Cardiac septum (tissue), 1 donor: ENCODE measurements at regions of chr16 and their contacts with region 1.

Region 1: DNA sequence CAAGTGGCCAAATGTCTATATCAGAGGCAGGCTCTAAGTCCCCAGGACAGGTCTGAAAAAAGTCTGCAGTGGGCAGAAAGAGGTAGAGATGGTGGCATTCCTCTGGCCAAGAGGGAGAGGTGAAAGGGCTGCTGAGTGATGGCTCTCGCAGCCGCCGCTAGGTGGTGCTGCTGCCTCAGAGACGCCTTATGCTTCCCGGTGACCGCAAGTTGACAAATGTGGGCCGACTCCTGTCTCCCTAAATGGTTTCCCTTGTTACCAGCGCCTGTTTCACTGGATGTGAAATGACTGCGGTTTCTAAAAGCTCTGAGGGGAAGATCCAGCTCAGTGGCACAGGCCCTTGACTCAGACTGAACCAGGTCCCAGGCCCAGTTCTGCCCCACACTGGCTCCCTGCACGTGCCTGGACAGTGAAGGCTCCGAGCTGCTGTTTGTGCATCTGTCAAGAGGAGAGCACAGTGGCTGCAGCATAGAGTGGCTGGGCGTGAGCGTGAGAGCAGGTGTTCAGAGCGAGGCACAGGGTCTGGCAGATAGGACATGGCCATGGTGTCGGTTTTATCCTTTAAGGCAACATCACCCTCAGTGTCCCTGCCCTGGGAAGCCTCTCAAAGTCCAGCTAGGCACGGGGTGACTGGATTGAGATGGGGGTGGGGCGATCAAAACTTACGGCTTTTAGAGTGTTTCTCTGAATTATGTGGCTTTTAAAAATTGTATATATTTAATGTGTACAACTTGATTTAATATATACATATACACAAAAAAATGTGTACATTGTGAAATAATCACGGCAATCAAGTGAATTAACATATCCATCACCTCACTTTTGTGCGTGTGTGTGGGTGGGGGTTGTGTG is 19.9 kb downstream of the CLEC16A start:
- DNase-seq: peak; percentile 91

Region 2: GRCh38 chr16:10944249-10945064 is 19.8 kb before region 1 on chr16 and contains the start of gene CLEC16A:
- intact Hi-C with region 1: no loop called
- DNase-seq: peak; percentile 99
- total RNA-seq, gene CLEC16A: 28.4 TPM

Region 3: DNA sequence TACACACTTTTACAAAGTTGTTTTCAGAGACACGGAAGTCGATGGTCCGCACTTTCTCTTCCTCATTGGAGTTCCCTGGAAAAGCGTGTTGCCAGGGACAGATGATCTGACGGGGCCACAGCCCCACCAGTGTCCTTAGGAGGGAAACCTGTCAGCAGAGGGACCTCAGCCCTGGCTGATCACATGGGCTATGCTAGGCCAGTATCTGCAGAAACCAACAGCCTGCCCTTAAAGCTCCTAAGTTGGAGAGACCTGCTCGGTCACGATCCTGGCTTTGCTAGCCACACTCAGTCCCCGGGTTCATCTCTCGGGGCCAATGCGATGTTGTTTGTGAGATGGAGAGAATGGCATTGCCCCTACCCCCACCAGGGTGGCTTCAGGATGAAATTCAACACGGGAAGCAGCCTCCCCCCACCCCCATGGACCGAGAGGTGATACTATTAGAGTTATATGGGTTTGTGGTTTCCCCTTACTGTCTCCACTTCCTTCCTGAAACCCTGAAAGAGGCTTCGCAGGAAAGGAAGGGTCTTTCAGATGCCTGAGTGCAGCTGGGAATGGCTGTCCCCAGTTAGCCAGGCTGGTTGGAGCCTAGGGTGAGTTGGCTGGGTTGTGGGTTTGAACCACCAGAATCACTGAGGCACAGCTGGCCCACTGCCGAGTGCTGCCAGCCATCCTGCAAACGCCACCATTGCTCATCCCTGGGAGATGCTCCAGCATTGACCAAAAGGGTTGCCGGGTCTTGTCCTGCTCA is 397.6 kb after region 1 on chr16:
- intact Hi-C with region 1: loop called (anchors 10 kb)
- DNase-seq: peak; percentile 59

Region 4: DNA sequence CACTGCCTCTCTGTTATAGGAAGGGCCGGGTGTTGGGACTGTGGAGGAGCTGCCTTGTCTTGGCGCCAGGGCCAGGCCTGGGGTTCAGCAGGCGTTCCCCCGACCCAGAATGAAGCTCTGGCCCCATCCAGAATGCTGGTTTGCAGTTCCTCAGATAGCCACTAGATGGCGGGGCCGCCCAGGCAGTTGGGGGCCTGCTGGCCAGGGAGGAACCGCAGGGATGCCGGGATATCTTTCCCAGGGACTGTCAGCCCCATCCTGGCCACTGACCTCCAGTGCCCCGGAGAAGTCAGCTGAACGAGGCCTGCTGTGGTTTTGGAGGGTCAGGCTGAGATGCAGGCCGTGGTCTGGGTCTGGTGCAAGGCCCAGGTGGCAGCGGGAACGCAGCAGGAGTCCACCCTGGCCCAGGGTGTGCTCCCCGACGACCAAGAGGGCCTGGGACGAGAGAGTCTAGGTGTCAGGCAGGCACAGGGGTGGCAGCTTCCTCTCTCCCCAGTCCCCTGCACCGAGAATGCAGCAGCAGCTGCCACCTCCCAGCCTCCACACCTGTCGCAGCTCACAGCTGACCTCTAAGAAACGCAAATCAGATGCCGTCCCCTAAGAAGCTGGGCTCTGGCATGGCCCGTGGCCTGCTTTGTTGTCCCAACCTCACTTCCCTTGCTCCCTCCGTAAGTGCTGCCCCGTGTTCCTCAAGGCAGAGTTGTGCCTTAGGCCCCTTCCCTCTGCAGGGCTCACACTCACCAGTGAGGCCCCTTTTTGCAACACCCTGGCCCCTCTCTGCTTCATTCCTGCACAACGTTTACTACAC is 432.2 kb after region 1 on chr16:
- intact Hi-C with region 1: loop called (anchors 10 kb)
- DNase-seq: peak; percentile 87

Region 5: DNA sequence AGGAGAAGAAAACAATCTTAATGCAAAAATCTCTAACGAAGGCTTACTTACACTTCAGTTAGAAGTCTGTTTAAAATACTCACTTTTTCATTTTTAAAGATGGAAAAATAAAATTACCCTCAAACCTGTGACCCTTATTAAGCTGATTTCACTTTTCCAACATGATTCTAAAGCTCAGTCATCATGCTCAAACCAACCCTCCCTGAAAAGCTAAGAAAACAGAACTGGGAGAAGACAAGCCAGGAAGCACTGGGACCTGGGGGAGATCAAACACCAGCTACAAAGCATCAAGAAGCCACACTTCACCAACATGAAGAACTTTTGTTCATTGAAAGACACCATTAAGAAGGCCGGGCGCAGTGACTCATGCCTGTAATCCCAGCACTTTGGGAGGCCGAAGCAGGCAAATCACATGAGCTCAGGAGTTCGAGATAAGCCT is 533.6 kb after region 1 on chr16:
- intact Hi-C with region 1: loop called (anchors 10 kb)
- DNase-seq: no peak

Region 6: GRCh38 chr16:11639925-11640899 is 675.9 kb after region 1 on chr16:
- intact Hi-C with region 1: loop called (anchors 10 kb)
- DNase-seq: peak; percentile 89

Region 7: GRCh38 chr16:11715246-11715947 is 751.1 kb after region 1 on chr16:
- intact Hi-C with region 1: loop called (anchors 10 kb)
- DNase-seq: no peak

Region 8: DNA sequence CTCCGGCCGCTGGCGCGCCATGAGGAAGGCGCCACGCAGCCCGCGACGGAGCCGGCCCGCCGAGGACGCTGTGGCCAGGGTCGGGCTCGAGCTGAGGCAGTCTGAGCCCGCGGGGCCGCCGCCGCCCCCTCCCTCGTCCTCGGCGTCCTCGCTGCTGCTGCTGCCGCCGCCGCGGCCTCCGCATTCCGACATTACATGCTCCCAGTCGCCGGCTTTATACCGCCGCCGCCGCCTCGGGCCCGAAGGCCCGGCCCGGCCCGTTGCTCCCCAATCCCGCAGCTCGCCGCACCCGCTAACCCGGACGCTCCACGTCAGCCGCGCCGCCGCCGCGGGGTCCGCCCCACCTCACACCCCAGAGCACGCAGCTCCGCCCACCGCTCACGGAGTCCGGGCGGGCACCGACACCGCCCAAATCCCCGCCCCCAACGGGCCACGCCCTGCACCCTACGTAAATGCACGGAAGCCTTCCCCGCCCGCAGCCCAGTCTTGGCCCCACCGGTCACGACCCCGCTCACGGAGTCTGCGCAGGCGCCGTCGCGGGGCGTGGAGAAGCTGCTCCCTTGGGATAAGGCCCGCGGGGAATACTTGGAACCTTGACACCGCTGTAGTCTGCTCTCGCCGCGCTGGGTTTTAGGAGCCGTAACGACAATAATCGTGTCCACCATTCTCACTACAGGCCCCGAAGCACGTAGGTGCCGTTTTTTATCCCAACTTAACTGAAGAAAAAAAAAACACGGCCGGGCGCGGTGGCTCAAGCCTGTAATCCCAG is 778.5 kb after region 1 on chr16 and contains the start of gene TXNDC11:
- intact Hi-C with region 1: loop called (anchors 10 kb)
- DNase-seq: peak; percentile 100
- total RNA-seq, gene TXNDC11: 27.0 TPM